ENCODE measurements at regions of chr13 and their contacts with region 1.

Region 1: DNA sequence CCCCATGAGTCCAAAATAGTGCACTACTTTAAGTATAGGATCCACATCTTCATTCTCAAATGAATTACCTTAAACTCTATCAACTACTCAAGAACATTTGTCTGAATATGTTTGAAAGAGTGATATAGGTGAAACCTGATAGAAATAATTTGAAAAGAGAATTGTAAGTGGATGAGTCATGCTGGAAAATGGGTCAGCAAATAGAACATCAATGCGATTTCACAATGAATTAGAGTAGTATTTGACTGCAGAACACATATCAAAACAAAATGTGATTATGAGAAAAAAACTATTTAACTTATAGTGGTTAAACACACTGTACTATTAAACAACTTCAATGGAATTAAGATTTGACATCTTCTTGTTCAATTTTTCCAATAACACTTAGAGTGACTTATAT is 300.6 kb upstream of the KLHL1 start:
- DNase-seq: no peak
- H3K4me3 ChIP-seq: no peak overlapping the region
- H3K4me3 Mint-ChIP-seq: no peak overlapping the region
- H3K27ac Mint-ChIP-seq: no peak overlapping the region
- H3K4me1 ChIP-seq: peaks cover 7% of the 10 kb centered on the region; the same call in 1 of the 2 replicates
- H3K4me1 Mint-ChIP-seq: peaks cover 8% of the 10 kb centered on the region
- H3K27me3 ChIP-seq: no peaks in the 10 kb centered on the region
- H3K27me3 Mint-ChIP-seq: no peaks in the 10 kb centered on the region
- CTCF ChIP-seq: no peak

Region 2: GRCh38 chr13:70117338-70117905 is 291.4 kb before region 1 on chr13:
- CTCF ChIA-PET with region 1: no interaction called
- POLR2A ChIA-PET with region 1: no interaction called
- intact Hi-C with region 1: no loop called
- DNase-seq: no peak
- H3K4me3 ChIP-seq: no peak overlapping the region
- H3K4me3 Mint-ChIP-seq: no peak overlapping the region
- H3K27ac Mint-ChIP-seq: no peak overlapping the region
- H3K4me1 ChIP-seq: no peaks in the 10 kb centered on the region
- H3K4me1 Mint-ChIP-seq: no peaks in the 10 kb centered on the region
- H3K27me3 ChIP-seq: no peaks in the 10 kb centered on the region
- H3K27me3 Mint-ChIP-seq: no peaks in the 10 kb centered on the region
- CTCF ChIP-seq: no peak

Region 3: DNA sequence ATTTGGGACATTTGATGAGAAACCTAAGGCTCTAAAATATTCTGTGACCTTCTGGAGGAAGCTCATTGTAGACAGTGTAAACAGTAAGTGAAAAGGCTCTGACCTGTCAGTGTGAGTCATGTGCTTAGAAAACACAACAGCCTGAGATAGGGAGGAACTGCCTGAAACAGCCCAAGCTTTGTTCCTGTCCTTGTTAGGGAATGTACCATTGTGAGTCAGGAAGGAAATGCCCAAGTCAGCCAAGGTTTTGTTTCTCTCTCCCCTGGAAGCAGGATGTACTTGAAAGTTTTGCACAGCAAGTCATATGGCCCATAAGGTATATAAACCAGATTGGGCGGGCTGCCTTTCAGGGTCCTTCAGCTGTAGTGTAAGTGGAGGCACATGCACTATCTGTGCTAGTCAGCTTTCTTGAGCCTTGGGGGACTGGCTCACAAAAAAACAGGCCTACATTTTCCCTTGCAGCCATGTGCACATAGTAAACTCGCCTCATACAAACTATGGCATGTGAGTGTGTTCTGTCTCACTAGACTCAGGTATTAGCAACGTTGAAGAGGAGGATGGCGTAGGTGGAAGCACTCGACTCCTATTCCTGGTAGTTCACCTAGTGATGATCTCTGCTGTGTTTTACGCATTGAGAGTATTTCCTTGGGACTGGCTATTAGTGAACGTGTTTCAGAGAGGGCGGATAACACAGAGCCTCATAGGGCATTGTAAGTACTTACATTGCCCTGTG is 159.4 kb before region 1 on chr13:
- CTCF ChIA-PET with region 1: no interaction called
- POLR2A ChIA-PET with region 1: no interaction called
- intact Hi-C with region 1: no loop called
- DNase-seq: peak; percentile 36 to 46
- H3K4me3 ChIP-seq: no peak overlapping the region
- H3K4me3 Mint-ChIP-seq: no peak overlapping the region
- H3K27ac Mint-ChIP-seq: no peak overlapping the region
- H3K4me1 ChIP-seq: peaks cover 11% of the 10 kb centered on the region; the same call in 1 of the 2 replicates
- H3K4me1 Mint-ChIP-seq: peaks cover 8% of the 10 kb centered on the region
- H3K27me3 ChIP-seq: no peaks in the 10 kb centered on the region
- H3K27me3 Mint-ChIP-seq: no peaks in the 10 kb centered on the region
- CTCF ChIP-seq: no peak

Region 4: DNA sequence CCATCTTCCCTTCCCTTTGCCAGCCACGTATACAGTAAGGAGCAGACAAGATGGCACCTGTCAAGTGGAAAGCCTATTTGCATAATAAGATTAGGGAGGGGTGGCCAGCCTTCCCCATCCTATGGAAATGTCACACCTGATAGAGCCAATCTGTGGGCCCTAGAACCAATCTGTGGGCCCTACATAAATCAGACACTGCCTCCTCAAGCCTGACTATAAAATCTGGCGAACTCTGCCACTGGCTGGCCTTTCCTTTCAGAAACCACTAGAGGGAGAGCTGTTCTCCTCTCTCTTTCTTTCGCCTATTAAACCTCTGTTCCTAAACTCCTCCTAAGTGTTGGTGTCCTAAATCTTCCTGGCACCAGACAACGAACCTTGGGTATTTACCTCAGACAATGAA is 69.1 kb before region 1 on chr13:
- CTCF ChIA-PET with region 1: no interaction called
- POLR2A ChIA-PET with region 1: no interaction called
- intact Hi-C with region 1: loop called (anchors 5 kb)
- DNase-seq: peak in 1 of 2 experiments; percentile 55
- H3K4me3 ChIP-seq: no peak overlapping the region
- H3K4me3 Mint-ChIP-seq: no peak overlapping the region
- H3K27ac Mint-ChIP-seq: no peak overlapping the region
- H3K4me1 ChIP-seq: no peaks in the 10 kb centered on the region
- H3K4me1 Mint-ChIP-seq: no peaks in the 10 kb centered on the region
- H3K27me3 ChIP-seq: no peaks in the 10 kb centered on the region
- H3K27me3 Mint-ChIP-seq: peaks cover 3% of the 10 kb centered on the region
- CTCF ChIP-seq: peak; percentile 65 to 76

Region 5: GRCh38 chr13:70391678-70392077 is 17.2 kb before region 1 on chr13:
- CTCF ChIA-PET with region 1: no interaction called
- POLR2A ChIA-PET with region 1: no interaction called
- intact Hi-C with region 1: loop called (anchors 1 kb)
- DNase-seq: peak; percentile 87 to 93
- H3K4me3 ChIP-seq: no peak overlapping the region
- H3K4me3 Mint-ChIP-seq: peak overlapping the region; percentile 2
- H3K27ac Mint-ChIP-seq: peak overlapping the region; percentile 17
- H3K4me1 ChIP-seq: peaks cover 52% of the 10 kb centered on the region
- H3K4me1 Mint-ChIP-seq: peaks cover 38% of the 10 kb centered on the region
- H3K27me3 ChIP-seq: no peaks in the 10 kb centered on the region
- H3K27me3 Mint-ChIP-seq: no peaks in the 10 kb centered on the region
- CTCF ChIP-seq: no peak

Measured in Caco-2 (cell line).